ENCODE measurements at regions of chr16 and their contacts with region 1.

Region 1: GRCh38 chr16:71645453-71645852 is 19.5 kb downstream of the MARVELD3 start:
- DNase-seq: peak in 1 of 2 experiments; percentile 57
- H3K4me3 ChIP-seq: no peak overlapping the region
- H3K4me3 Mint-ChIP-seq: no peak overlapping the region
- H3K27ac Mint-ChIP-seq: no peak overlapping the region
- H3K4me1 ChIP-seq: no peaks in the 10 kb centered on the region
- H3K4me1 Mint-ChIP-seq: no peaks in the 10 kb centered on the region
- H3K27me3 ChIP-seq: no peaks in the 10 kb centered on the region
- H3K27me3 Mint-ChIP-seq: no peaks in the 10 kb centered on the region
- CTCF ChIP-seq: peak; percentile 74 to 75

Region 2: GRCh38 chr16:71564155-71564967 is 81.1 kb before region 1 on chr16:
- CTCF ChIA-PET with region 1: no interaction called
- POLR2A ChIA-PET with region 1: no interaction called
- intact Hi-C with region 1: loop called (anchors 1 kb)
- DNase-seq: no peak
- H3K4me3 ChIP-seq: peak overlapping the region; percentile 44
- H3K4me3 Mint-ChIP-seq: peak overlapping the region; percentile 94
- H3K27ac Mint-ChIP-seq: peak overlapping the region; percentile 97
- H3K4me1 ChIP-seq: peaks cover 8% of the 10 kb centered on the region; the same call in 1 of the 2 replicates
- H3K4me1 Mint-ChIP-seq: peaks cover 20% of the 10 kb centered on the region
- H3K27me3 ChIP-seq: no peaks in the 10 kb centered on the region
- H3K27me3 Mint-ChIP-seq: no peaks in the 10 kb centered on the region
- CTCF ChIP-seq: no peak

Region 3: DNA sequence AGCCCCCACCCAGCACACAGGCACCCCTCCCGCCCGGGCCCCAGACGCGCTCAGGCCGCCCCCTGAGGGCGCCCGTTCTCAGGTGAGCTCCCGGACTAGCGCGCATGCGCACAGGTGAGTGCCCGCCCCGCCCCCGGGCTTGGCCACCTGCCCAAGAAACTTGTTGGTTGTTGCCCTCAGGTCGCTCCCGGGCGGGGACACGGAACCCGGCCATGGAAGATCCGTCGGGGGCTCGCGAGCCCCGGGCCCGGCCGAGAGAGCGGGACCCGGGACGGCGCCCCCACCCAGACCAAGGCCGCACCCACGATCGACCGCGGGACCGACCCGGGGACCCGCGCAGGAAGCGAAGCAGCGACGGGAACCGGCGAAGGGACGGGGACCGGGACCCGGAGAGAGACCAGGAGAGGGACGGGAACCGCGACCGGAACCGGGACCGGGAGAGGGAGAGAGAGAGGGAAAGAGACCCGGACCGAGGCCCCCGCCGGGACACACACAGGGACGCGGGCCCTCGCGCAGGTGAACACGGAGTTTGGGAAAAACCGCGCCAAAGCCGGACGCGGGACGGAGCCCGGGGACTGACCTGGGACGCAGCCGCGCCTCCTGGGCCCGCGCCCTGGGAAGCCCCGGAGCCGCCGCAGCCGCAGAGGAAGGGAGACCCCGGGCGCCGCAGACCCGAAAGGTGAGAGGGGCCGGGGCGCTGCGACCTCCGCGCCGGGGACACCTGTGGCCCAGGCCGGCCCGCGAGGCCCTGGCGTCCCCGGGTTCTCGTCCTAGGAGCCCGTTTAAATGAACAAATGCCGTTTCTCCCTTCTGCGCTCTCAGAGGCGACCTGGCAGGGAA is 19.2 kb before region 1 on chr16 and contains the start of gene MARVELD3:
- CTCF ChIA-PET with region 1: interaction called, 7 read pairs
- POLR2A ChIA-PET with region 1: no interaction called
- intact Hi-C with region 1: loop called (anchors 1 kb)
- DNase-seq: peak; percentile 96 to 99
- H3K4me3 ChIP-seq: peak within 1 kb of the TSS; percentile 85
- H3K4me3 Mint-ChIP-seq: no peak within 1 kb of the TSS
- H3K27ac Mint-ChIP-seq: peak within 1 kb of the TSS; percentile 75
- H3K4me1 ChIP-seq: peaks cover 12% of the 10 kb centered on the region
- H3K4me1 Mint-ChIP-seq: peaks cover 9% of the 10 kb centered on the region
- H3K27me3 ChIP-seq: no peaks in the 10 kb centered on the region
- H3K27me3 Mint-ChIP-seq: no peaks in the 10 kb centered on the region
- CTCF ChIP-seq: peak; percentile 41 to 75
- total RNA-seq, gene MARVELD3: 50.6 and 51.7 TPM in 2 replicates

Region 4: GRCh38 chr16:71961066-71962039 is 315.9 kb after region 1 on chr16:
- CTCF ChIA-PET with region 1: no interaction called
- POLR2A ChIA-PET with region 1: no interaction called
- intact Hi-C with region 1: loop called (anchors 10 kb)
- DNase-seq: peak; percentile 85 to 87
- H3K4me3 ChIP-seq: no peak overlapping the region
- H3K4me3 Mint-ChIP-seq: no peak overlapping the region
- H3K27ac Mint-ChIP-seq: no peak overlapping the region
- H3K4me1 ChIP-seq: no peaks in the 10 kb centered on the region
- H3K4me1 Mint-ChIP-seq: peaks cover 9% of the 10 kb centered on the region
- H3K27me3 ChIP-seq: no peaks in the 10 kb centered on the region
- H3K27me3 Mint-ChIP-seq: peaks cover 6% of the 10 kb centered on the region
- CTCF ChIP-seq: peak; percentile 92 to 94

Measured in Caco-2 (cell line).